B cell (primary cell): ENCODE measurements at regions of chr3 and their contacts with region 1.

Region 1: GRCh38 chr3:43105596-43106292 is at the start of gene POMGNT2:
- DNase-seq: peak; percentile 91
- ATAC-seq: peak; percentile 96
- H3K4me3 ChIP-seq: peak within 1 kb of the TSS; percentile 21 to 79 (median 72)
- H3K4me3 Mint-ChIP-seq: peak within 1 kb of the TSS; percentile 87
- H3K27ac ChIP-seq: peak within 1 kb of the TSS in 1 of 2 donors; percentile 65
- H3K27ac Mint-ChIP-seq: peak within 1 kb of the TSS; percentile 32
- H3K4me1 ChIP-seq: peaks cover 9 to 14% of the 10 kb centered on the region in 2 donors
- H3K4me1 Mint-ChIP-seq: peaks cover 14% of the 10 kb centered on the region
- H3K27me3 ChIP-seq: no peaks in the 10 kb centered on the region
- H3K27me3 Mint-ChIP-seq: no peaks in the 10 kb centered on the region
- CTCF ChIP-seq: no peak
- total RNA-seq, gene POMGNT2: 2.3 and 2.8 TPM in 2 replicates

Region 2: GRCh38 chr3:42772670-42773408 is 332.9 kb before region 1 on chr3 and contains the start of gene CCDC13:
- CTCF ChIA-PET with region 1: no interaction called
- POLR2A ChIA-PET with region 1: no interaction called
- intact Hi-C with region 1: loop called (anchors 2 kb)
- DNase-seq: peak; percentile 98
- ATAC-seq: peak; percentile 88
- H3K4me3 ChIP-seq: peak within 1 kb of the TSS; percentile 46 to 87 (median 62)
- H3K4me3 Mint-ChIP-seq: peak within 1 kb of the TSS; percentile 90
- H3K27ac ChIP-seq: peak within 1 kb of the TSS; percentile 66 to 81
- H3K27ac Mint-ChIP-seq: peak within 1 kb of the TSS; percentile 92
- H3K4me1 ChIP-seq: peaks cover 4 to 10% of the 10 kb centered on the region in 2 donors
- H3K4me1 Mint-ChIP-seq: peaks cover 11% of the 10 kb centered on the region
- H3K27me3 ChIP-seq: no peaks in the 10 kb centered on the region
- H3K27me3 Mint-ChIP-seq: no peaks in the 10 kb centered on the region
- CTCF ChIP-seq: no peak
- total RNA-seq, gene CCDC13: 1.9 and 2.5 TPM in 2 replicates

Region 3: GRCh38 chr3:43690400-43691119 is 584.8 kb after region 1 on chr3 and contains the start of gene ABHD5:
- CTCF ChIA-PET with region 1: no interaction called
- POLR2A ChIA-PET with region 1: no interaction called
- intact Hi-C with region 1: loop called (anchors 5 kb)
- DNase-seq: peak; percentile 98
- ATAC-seq: peak; percentile 82
- H3K4me3 ChIP-seq: peak within 1 kb of the TSS; percentile 58 to 86 (median 83)
- H3K4me3 Mint-ChIP-seq: peak within 1 kb of the TSS; percentile 98
- H3K27ac ChIP-seq: peak within 1 kb of the TSS; percentile 58 to 87
- H3K27ac Mint-ChIP-seq: peak within 1 kb of the TSS; percentile 98
- H3K4me1 ChIP-seq: peaks cover 5 to 21% of the 10 kb centered on the region in 2 donors
- H3K4me1 Mint-ChIP-seq: peaks cover 27% of the 10 kb centered on the region
- H3K27me3 ChIP-seq: no peaks in the 10 kb centered on the region
- H3K27me3 Mint-ChIP-seq: no peaks in the 10 kb centered on the region
- CTCF ChIP-seq: peak; percentile 39
- total RNA-seq, gene ABHD5: 11.0 and 12.1 TPM in 2 replicates

Region 4: DNA sequence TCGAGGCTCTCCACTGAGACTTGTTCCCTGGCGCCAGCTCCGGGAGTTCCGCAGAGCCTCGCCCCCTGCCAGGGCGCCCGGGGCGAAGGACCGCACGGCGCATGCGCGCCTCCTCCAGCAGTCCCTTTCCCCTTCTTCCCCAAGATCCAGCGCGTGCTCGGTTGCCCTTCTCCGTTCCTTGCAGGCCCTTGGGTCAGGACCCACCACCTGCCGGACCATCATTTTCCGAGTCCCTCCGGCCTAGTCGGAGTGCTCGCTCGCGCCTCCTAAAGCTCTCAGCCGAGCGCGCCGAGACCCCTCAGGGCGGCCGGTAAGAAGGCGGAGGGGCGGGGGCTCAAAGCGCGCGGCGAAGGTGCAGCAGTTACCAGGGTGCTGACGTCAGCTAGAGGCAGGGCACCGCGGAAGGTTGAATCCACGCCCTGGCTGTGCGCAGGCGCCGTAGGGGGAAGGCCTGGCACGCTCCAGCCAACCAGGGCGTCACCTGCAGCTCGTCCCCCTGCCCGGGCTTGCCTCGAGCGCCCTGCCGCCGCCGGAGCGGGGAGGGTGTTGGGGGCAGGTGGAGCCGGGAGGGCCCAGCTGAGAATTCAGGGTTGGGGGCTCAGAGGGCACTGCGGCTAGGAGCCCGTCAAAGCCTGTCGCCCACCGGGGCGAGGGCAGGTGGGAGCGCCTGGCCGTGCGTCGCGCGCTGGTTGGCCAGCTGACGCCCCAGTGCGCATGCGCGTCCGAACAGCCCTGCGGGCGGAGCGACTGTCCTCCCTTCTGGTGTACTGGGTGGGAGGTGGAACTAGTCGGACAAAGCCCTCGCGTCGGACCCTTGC is 1232.5 kb after region 1 on chr3 and contains the start of gene TCAIM:
- CTCF ChIA-PET with region 1: no interaction called
- POLR2A ChIA-PET with region 1: no interaction called
- intact Hi-C with region 1: loop called (anchors 5 kb)
- DNase-seq: peak; percentile 100
- ATAC-seq: peak; percentile 90
- H3K4me3 ChIP-seq: peak within 1 kb of the TSS; percentile 85 to 97 (median 87)
- H3K4me3 Mint-ChIP-seq: peak within 1 kb of the TSS; percentile 99
- H3K27ac ChIP-seq: peak within 1 kb of the TSS; percentile 80 to 88
- H3K27ac Mint-ChIP-seq: peak within 1 kb of the TSS; percentile 99
- H3K4me1 ChIP-seq: peaks cover 16 to 19% of the 10 kb centered on the region in 2 donors
- H3K4me1 Mint-ChIP-seq: peaks cover 29% of the 10 kb centered on the region
- H3K27me3 ChIP-seq: no peaks in the 10 kb centered on the region
- H3K27me3 Mint-ChIP-seq: peaks cover 9% of the 10 kb centered on the region
- CTCF ChIP-seq: no peak
- total RNA-seq, gene TCAIM: 15.8 and 16.7 TPM in 2 replicates